ENCODE measurements at regions of chr16 and their contacts with region 1.

Region 1: GRCh38 chr16:21194771-21195301 is 16.5 kb downstream of the ZP2 start:
- DNase-seq: no peak
- ATAC-seq: no peak
- H3K4me3 ChIP-seq: no peak overlapping the region
- H3K27ac ChIP-seq: no peak overlapping the region
- H3K4me1 ChIP-seq: no peaks in the 10 kb centered on the region
- H3K27me3 ChIP-seq: peaks cover 0 to 23% (median 7%) of the 10 kb centered on the region in 7 donors
- CTCF ChIP-seq: no peak

Region 2: DNA sequence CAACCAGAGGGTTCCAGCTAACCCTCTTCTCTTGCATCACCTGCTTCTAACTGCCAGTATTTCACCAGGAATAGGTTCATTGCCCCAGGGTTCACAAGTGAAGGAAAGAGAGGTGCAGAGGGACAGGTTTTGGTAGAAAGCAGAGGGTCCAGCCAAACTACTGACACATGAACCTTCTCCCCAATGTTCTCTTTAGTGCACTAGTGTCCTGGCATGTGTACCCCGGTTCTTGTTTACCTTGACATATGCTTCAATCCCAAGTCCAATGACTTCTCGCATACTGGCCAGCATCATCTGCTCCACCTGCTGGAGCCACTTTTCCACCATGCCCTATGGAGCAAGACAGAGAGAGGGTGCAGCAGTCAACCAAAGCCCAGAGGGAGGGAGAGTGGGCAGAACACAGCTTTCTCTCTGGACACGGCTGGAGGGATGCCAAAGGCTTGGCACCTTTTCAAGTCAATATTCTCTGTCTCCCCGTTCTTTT is 134.8 kb before region 1 on chr16:
- intact Hi-C with region 1: no loop called
- DNase-seq: no peak
- ATAC-seq: no peak
- H3K4me3 ChIP-seq: no peak overlapping the region
- H3K27ac ChIP-seq: no peak overlapping the region
- H3K4me1 ChIP-seq: no peaks in the 10 kb centered on the region
- H3K27me3 ChIP-seq: no peaks in the 10 kb centered on the region
- CTCF ChIP-seq: no peak

Region 3: GRCh38 chr16:21283521-21284289 is 88.9 kb after region 1 on chr16:
- intact Hi-C with region 1: no loop called
- DNase-seq: peak; percentile 43 to 64
- ATAC-seq: peak; percentile 87 to 97 (median 92)
- H3K4me3 ChIP-seq: peak overlapping the region; percentile 34 to 57 (median 50)
- H3K27ac ChIP-seq: peak overlapping the region; percentile 10 to 84 (median 62)
- H3K4me1 ChIP-seq: peaks cover 0 to 19% (median 6%) of the 10 kb centered on the region in 9 donors
- H3K27me3 ChIP-seq: peaks cover 0 to 90% (median 31%) of the 10 kb centered on the region in 7 donors
- CTCF ChIP-seq: peak in 8 of 9 donors; percentile 17 to 72 (median 54)

Region 4: GRCh38 chr16:21300309-21301167 is 105.7 kb after region 1 on chr16:
- intact Hi-C with region 1: loop called in 1 of 10 experiments (anchors 5 kb)
- DNase-seq: peak; percentile 72 to 98
- ATAC-seq: peak; percentile 93 to 99 (median 96)
- H3K4me3 ChIP-seq: peak overlapping the region; percentile 7 to 79 (median 64)
- H3K27ac ChIP-seq: peak overlapping the region; percentile 14 to 87 (median 73)
- H3K4me1 ChIP-seq: peaks cover 0 to 19% (median 7%) of the 10 kb centered on the region in 9 donors
- H3K27me3 ChIP-seq: peaks cover 0 to 22% (median 0%) of the 10 kb centered on the region in 7 donors
- CTCF ChIP-seq: peak; percentile 62 to 97 (median 82)